ENCODE measurements at regions of chr1 and their contacts with region 1.

Region 1: GRCh38 chr1:101309334-101310311 is 72.8 kb downstream of the S1PR1 start:
- DNase-seq: peak; percentile 80
- H3K4me3 Mint-ChIP-seq: peak overlapping the region; percentile 71
- H3K27ac Mint-ChIP-seq: peak overlapping the region; percentile 48
- H3K4me1 Mint-ChIP-seq: peaks cover 68% of the 10 kb centered on the region
- H3K27me3 Mint-ChIP-seq: no peaks in the 10 kb centered on the region

Region 2: GRCh38 chr1:100622037-100622436 is 687.6 kb before region 1 on chr1:
- CTCF ChIA-PET with region 1: no interaction called
- intact Hi-C with region 1: no loop called
- DNase-seq: peak; percentile 40
- H3K4me3 Mint-ChIP-seq: no peak overlapping the region
- H3K27ac Mint-ChIP-seq: no peak overlapping the region
- H3K4me1 Mint-ChIP-seq: peaks cover 9% of the 10 kb centered on the region
- H3K27me3 Mint-ChIP-seq: no peaks in the 10 kb centered on the region

Region 3: DNA sequence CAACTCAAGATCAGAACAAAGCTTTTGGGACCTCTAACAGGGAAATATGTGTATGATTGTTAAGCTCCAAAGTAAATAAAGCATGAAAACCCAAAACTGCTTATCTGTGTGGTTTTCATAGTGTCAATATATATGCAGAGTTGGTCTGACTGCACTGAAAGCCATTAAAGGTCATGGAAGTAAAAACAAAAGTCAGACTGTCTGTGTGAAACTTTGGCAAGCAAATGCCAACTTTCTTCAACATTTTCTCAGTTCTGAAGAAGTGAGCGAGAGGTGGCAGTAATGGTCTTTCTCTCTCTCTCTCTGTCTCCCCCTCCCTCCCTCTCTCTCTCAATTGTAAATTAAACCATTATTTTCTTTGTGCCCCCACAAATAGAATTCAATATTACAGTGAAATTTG is 172.9 kb before region 1 on chr1:
- CTCF ChIA-PET with region 1: interaction called, 11 read pairs
- intact Hi-C with region 1: no loop called
- DNase-seq: peak; percentile 61
- H3K4me3 Mint-ChIP-seq: no peak overlapping the region
- H3K27ac Mint-ChIP-seq: peak overlapping the region; percentile 62
- H3K4me1 Mint-ChIP-seq: peaks cover 67% of the 10 kb centered on the region
- H3K27me3 Mint-ChIP-seq: no peaks in the 10 kb centered on the region

Region 4: GRCh38 chr1:101346419-101346818 is 36.8 kb after region 1 on chr1:
- CTCF ChIA-PET with region 1: interaction called, 110 read pairs
- intact Hi-C with region 1: loop called (anchors 2 kb)
- DNase-seq: no peak
- H3K4me3 Mint-ChIP-seq: no peak overlapping the region
- H3K27ac Mint-ChIP-seq: no peak overlapping the region
- H3K4me1 Mint-ChIP-seq: peaks cover 28% of the 10 kb centered on the region
- H3K27me3 Mint-ChIP-seq: no peaks in the 10 kb centered on the region

Region 5: DNA sequence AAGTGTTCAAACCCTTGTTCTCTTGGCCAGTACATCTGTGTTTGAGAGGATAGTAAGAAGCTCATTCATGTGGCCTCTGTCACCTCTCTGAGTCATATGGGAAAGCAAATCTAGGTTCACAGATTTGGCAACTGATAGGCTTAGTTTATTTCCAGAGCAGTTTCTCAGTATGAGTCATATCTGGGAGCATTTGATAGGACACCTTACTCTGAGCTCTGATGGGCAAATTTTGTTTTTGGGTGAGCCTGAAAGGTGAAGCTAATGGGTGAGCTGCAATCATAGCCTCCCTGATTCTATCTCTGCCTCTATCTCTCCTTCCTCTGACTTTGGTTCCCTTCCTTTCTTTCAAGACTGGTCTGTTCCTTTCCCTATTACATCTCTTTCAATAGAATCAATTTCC is 61.6 kb after region 1 on chr1:
- CTCF ChIA-PET with region 1: interaction called, 12 read pairs
- intact Hi-C with region 1: no loop called
- DNase-seq: peak; percentile 26
- H3K4me3 Mint-ChIP-seq: no peak overlapping the region
- H3K27ac Mint-ChIP-seq: peak overlapping the region; percentile 18
- H3K4me1 Mint-ChIP-seq: peaks cover 11% of the 10 kb centered on the region
- H3K27me3 Mint-ChIP-seq: no peaks in the 10 kb centered on the region

Region 6: GRCh38 chr1:101496109-101496508 is 186.5 kb after region 1 on chr1:
- CTCF ChIA-PET with region 1: no interaction called
- intact Hi-C with region 1: loop called (anchors 5 kb)
- DNase-seq: peak; percentile 32
- H3K4me3 Mint-ChIP-seq: no peak overlapping the region
- H3K27ac Mint-ChIP-seq: no peak overlapping the region
- H3K4me1 Mint-ChIP-seq: peaks cover 2% of the 10 kb centered on the region
- H3K27me3 Mint-ChIP-seq: no peaks in the 10 kb centered on the region

Measured in activated naive CD4-positive, alpha-beta T cell treated with anti-CD3 and anti-CD28 coated beads for 36 hours (primary cell).